ENCODE measurements at regions of chr1 and their contacts with region 1.

Region 1: DNA sequence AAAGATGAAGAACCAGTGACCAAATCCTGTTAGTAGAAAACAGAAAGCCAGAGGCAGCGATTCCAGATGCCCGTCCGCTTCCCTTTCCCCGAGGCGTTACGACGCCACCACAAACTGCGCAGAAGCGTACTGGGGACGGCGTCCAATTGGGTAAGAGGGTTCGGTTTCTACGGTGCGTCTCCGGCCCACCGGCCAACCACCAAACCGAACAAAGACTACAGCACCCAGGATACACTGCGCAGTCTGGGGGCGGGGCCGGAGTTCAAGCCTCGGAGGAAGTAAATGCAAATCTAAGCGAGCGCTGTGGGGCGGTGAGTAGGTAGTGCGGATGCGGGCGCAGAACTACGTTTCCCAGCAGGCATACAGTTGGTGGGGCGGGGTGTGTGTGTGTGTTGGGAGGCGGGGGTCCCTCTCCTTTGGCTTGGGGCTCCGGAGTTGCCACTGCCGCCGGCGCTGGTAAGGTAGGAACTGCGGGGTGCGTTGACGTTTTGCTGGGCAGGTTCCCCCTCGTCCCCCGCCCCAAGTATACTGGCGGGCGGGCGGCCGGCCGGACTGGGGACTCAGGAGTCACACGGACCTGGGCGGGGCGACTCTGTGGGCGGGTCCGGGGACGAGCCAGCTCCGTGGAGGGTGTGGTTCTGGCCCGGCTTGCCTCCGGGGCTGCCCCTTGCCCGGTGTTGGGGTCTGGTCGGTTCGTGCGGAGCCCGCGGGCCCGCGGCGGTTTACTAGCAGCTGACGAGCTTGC is at the starts of genes SWT1 and TRMT1L:
- DNase-seq: peak; percentile 95

Region 2: GRCh38 chr1:185044981-185045813 is 111.8 kb before region 1 on chr1 and contains the start of gene RNF2:
- CTCF ChIA-PET with region 1: no interaction called
- POLR2A ChIA-PET with region 1: interaction called, 12 read pairs
- DNase-seq: peak; percentile 92

Region 3: GRCh38 chr1:185170291-185170848 is 13.3 kb after region 1 on chr1:
- CTCF ChIA-PET with region 1: interaction called, 18 read pairs
- POLR2A ChIA-PET with region 1: interaction called, 4 read pairs
- DNase-seq: peak; percentile 72

Region 4: DNA sequence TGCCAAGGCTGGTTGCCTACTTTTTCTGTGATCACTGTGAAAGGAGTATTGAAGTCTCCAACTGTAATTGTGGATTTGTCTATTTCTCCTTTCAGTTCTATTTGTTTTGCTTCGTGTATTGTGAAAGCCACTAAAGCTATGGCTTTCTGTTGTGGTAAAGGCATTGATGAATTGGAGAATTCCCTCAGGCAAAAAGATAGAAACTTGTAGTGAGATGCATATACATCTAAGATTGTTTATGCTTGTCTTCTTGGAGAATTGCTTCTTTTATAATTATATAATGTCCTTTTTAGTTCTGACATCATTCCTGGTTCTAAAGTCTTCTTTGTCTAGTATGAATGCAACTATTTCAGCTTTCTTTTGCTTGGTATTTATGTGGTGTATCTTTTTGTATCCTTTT is 36.7 kb after region 1 on chr1:
- CTCF ChIA-PET with region 1: no interaction called
- POLR2A ChIA-PET with region 1: no interaction called
- DNase-seq: no peak